ENCODE measurements at regions of chr16 and their contacts with region 1.

Region 1: DNA sequence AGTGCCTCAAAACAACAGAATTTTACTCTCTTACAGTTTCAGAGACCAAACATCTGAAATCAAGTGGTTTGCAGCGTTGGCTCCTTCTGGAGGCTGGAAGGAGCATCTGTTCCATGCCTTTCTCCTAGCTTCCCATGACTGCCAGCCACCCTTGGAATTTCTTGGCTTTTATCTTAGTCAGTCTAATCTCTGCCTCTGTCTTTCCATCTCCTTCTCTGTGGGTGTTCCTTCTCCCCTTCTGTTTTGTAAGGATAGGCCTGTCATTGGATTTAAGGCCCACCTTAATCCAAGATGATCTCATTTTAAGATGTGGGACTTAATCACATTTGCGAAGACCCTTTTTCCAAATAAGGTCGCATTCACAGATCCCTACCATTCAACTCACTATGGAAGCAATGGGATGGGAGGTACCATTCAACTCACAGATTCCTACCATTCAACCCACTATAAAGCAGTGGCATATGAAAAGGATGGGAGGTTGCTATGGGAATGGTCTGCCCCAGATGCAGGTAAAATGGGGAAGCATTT is 321.8 kb downstream of the WWOX start:
- DNase-seq: no peak
- H3K27ac ChIP-seq: no peak overlapping the region
- CTCF ChIP-seq: no peak

Region 2: GRCh38 chr16:78353610-78354275 is 67.5 kb before region 1 on chr16:
- CTCF ChIA-PET with region 1: no interaction called
- POLR2A ChIA-PET with region 1: interaction called, 11 read pairs
- DNase-seq: no peak
- H3K27ac ChIP-seq: no peak overlapping the region
- CTCF ChIP-seq: no peak